GM23248 (cell line): ENCODE measurements at regions of chr4 and their contacts with region 1.

Region 1: GRCh38 chr4:61397174-61397573 is 197.0 kb downstream of the ADGRL3 start:
- DNase-seq: no peak
- H3K4me3 ChIP-seq: no peak overlapping the region
- H3K27ac ChIP-seq: no peak overlapping the region
- H3K4me1 ChIP-seq: no peaks in the 10 kb centered on the region
- H3K27me3 ChIP-seq: no peaks in the 10 kb centered on the region

Region 2: GRCh38 chr4:61277785-61278760 is 119.1 kb before region 1 on chr4:
- in situ Hi-C with region 1: loop called (anchors 25 kb)
- DNase-seq: no peak
- H3K4me3 ChIP-seq: no peak overlapping the region
- H3K27ac ChIP-seq: no peak overlapping the region
- H3K4me1 ChIP-seq: no peaks in the 10 kb centered on the region
- H3K27me3 ChIP-seq: no peaks in the 10 kb centered on the region

Region 3: GRCh38 chr4:61886131-61886530 is 489.0 kb after region 1 on chr4:
- in situ Hi-C with region 1: no loop called
- DNase-seq: no peak
- H3K4me3 ChIP-seq: no peak overlapping the region
- H3K27ac ChIP-seq: no peak overlapping the region
- H3K4me1 ChIP-seq: no peaks in the 10 kb centered on the region
- H3K27me3 ChIP-seq: no peaks in the 10 kb centered on the region